Activated naive CD4-positive, alpha-beta T cell treated with anti-CD3 and anti-CD28 coated beads for 36 hours (primary cell): ENCODE measurements at regions of chr17 and their contacts with region 1.

Region 1: GRCh38 chr17:49180303-49180702 is 30.1 kb downstream of the GNGT2 start:
- DNase-seq: peak; percentile 77
- H3K4me3 Mint-ChIP-seq: no peak overlapping the region
- H3K27ac Mint-ChIP-seq: no peak overlapping the region
- H3K4me1 Mint-ChIP-seq: no peaks in the 10 kb centered on the region
- H3K27me3 Mint-ChIP-seq: peaks cover under 1% of the 10 kb centered on the region

Region 2: DNA sequence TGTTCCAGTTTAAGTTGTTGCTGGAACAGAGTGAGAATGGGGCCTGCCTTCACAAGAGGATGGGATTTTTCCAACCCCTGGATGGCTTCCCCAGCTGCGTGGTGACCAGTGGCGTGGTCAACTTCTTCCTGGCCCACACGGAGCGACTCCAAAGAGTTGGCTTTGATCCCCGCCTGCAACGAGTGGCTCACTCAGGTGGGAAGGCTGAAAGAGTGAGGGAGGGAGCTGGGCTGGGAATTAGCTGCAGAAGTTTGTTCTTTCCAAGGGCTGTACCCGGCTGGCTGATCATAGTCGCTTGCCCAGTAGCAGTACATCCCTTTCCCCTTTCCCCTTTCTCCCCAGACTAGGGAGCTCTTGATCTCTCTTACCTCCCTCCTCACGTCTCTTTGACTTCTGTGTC is 11.6 kb before region 1 on chr17:
- CTCF ChIA-PET with region 1: interaction called, 17 read pairs
- intact Hi-C with region 1: no loop called
- DNase-seq: no peak
- H3K4me3 Mint-ChIP-seq: no peak overlapping the region
- H3K27ac Mint-ChIP-seq: no peak overlapping the region
- H3K4me1 Mint-ChIP-seq: no peaks in the 10 kb centered on the region
- H3K27me3 Mint-ChIP-seq: peaks cover 36% of the 10 kb centered on the region

Region 3: DNA sequence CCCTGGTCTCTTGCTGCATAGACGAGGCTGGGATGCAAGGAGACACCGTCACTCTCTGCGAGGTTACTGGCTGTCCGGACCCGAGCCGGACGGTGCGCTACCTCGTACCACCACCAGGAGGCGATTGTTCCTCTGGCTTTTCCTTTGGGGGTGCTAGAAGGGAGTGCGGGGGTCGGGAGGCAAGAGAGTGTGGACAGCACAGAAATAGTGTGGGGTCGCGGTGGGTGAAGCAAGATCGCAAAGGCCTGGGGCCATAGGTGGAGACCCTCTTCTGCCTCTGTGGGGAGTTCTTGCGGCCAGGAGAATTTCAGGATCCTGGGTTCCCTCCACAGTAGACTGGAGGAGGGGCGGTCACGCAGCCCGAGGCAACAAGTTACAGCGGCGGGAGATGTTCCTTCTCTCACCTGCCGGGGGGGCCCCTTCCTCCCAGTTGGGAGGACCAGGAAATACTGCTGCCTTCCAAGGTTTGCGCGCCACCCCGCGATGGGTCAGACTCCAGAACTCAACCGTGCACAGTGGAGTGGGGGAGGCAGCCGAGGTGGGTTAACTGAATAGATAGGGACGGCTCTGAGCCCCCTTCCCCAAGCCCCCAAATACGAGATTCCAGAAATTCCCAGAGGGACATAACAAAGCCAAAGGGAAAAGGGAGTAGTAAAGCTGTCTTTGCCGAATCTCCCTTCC is 43.4 kb after region 1 on chr17:
- CTCF ChIA-PET with region 1: interaction called, 117 read pairs
- intact Hi-C with region 1: loop called (anchors 1 kb)
- DNase-seq: peak; percentile 81
- H3K4me3 Mint-ChIP-seq: peak overlapping the region; percentile 63
- H3K27ac Mint-ChIP-seq: peak overlapping the region; percentile 19
- H3K4me1 Mint-ChIP-seq: peaks cover 28% of the 10 kb centered on the region
- H3K27me3 Mint-ChIP-seq: peaks cover 10% of the 10 kb centered on the region

Region 4: GRCh38 chr17:49230636-49231562 is 50.6 kb after region 1 on chr17 and contains the start of gene PHOSPHO1:
- CTCF ChIA-PET with region 1: interaction called, 117 read pairs
- intact Hi-C with region 1: loop called (anchors 1 kb)
- DNase-seq: peak; percentile 82
- H3K4me3 Mint-ChIP-seq: peak within 1 kb of the TSS; percentile 75
- H3K27ac Mint-ChIP-seq: no peak within 1 kb of the TSS
- H3K4me1 Mint-ChIP-seq: peaks cover 8% of the 10 kb centered on the region
- H3K27me3 Mint-ChIP-seq: peaks cover 16% of the 10 kb centered on the region
- total RNA-seq, gene PHOSPHO1: not detected

Region 5: DNA sequence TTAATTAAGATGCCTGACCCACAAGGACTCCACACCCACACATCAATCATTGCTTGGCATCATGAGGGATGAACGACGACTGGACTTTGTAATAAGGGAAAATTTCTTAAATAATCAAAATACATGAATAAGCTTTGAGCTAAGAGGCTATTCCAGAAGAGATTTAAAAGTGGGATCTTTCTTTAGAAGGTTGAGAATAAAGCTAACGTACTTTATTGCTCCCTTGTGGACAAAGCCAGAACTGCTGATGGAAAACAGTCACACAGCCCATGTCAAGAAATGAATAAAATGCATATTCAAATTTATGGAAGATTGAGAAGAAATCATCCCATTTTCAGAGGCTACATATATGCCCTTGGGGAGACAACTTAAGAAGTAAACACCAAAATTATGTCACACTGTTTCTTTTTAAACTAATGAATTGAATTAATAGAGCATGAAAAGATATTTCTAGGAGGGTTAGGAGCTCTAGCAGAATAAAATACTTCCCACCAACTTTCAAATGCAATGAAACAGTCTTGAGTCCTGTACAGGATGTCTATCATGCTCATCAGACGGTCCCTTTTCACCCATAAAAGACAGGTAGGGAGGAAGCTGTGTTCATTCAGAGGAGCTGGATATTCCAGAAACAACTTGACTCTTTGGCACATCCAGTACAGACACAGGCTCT is 110.5 kb after region 1 on chr17:
- CTCF ChIA-PET with region 1: interaction called, 15 read pairs
- intact Hi-C with region 1: loop called (anchors 1 kb)
- DNase-seq: peak; percentile 40
- H3K4me3 Mint-ChIP-seq: no peak overlapping the region
- H3K27ac Mint-ChIP-seq: no peak overlapping the region
- H3K4me1 Mint-ChIP-seq: peaks cover 6% of the 10 kb centered on the region
- H3K27me3 Mint-ChIP-seq: no peaks in the 10 kb centered on the region

Region 6: DNA sequence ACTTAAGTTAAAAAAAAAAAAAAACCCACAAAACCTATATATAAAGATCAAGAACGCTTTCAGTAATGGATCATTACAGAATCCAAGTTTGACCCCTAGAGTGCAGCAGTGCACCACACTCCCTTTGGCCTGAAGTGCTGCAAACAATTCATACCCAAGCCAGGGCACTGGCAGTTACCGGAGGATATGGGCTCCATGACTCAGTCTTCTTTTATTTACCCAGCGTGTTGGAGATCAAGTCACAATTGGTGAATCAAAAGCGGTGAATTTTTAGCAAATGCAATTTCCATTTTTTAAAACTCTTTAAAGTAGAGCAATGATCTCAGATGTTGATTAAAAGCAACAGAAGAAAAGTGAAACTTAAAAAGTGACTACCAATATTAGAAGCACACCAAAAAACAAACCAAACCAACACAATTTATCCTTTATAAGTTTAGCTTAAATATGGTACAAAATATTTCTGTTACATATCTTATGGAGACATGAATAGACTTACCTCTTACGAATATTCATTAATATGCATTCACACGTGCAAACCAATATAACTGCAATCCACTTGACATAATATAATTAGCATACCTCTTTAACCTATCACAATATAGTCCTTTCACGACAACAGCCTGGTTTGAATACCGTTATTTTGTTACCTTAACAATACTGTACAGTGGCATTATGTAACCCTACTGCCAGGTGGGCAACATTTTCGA is 135.4 kb after region 1 on chr17:
- CTCF ChIA-PET with region 1: interaction called, 5 read pairs
- intact Hi-C with region 1: loop called (anchors 1 kb)
- DNase-seq: peak; percentile 91
- H3K4me3 Mint-ChIP-seq: peak overlapping the region; percentile 41
- H3K27ac Mint-ChIP-seq: peak overlapping the region; percentile 62
- H3K4me1 Mint-ChIP-seq: peaks cover 23% of the 10 kb centered on the region
- H3K27me3 Mint-ChIP-seq: no peaks in the 10 kb centered on the region

Region 7: GRCh38 chr17:49327835-49328784 is 147.8 kb after region 1 on chr17:
- CTCF ChIA-PET with region 1: no interaction called
- intact Hi-C with region 1: no loop called
- DNase-seq: peak; percentile 27
- H3K4me3 Mint-ChIP-seq: peak overlapping the region; percentile 0
- H3K27ac Mint-ChIP-seq: peak overlapping the region; percentile 42
- H3K4me1 Mint-ChIP-seq: peaks cover 45% of the 10 kb centered on the region
- H3K27me3 Mint-ChIP-seq: no peaks in the 10 kb centered on the region

Region 8: GRCh38 chr17:49390548-49391324 is 210.4 kb after region 1 on chr17:
- CTCF ChIA-PET with region 1: interaction called, 3 read pairs
- intact Hi-C with region 1: loop called (anchors 1 kb)
- DNase-seq: peak; percentile 22
- H3K4me3 Mint-ChIP-seq: no peak overlapping the region
- H3K27ac Mint-ChIP-seq: no peak overlapping the region
- H3K4me1 Mint-ChIP-seq: peaks cover 47% of the 10 kb centered on the region
- H3K27me3 Mint-ChIP-seq: no peaks in the 10 kb centered on the region